ENCODE measurements at regions of chr2 and their contacts with region 1.

Region 1: GRCh38 chr2:230987137-230988020 is 8.5 kb upstream of the SPATA3 start:
- DNase-seq: peak; percentile 47
- ATAC-seq: peak; percentile 97
- H3K4me3 ChIP-seq: peak overlapping the region; percentile 18
- H3K27ac ChIP-seq: no peak overlapping the region
- H3K4me1 ChIP-seq: no peaks in the 10 kb centered on the region
- H3K27me3 ChIP-seq: peaks cover 31% of the 10 kb centered on the region
- CTCF ChIP-seq: peak; percentile 94
- POLR2A ChIP-seq: no peak
- RAD21 ChIP-seq: peak; percentile 92

Region 2: DNA sequence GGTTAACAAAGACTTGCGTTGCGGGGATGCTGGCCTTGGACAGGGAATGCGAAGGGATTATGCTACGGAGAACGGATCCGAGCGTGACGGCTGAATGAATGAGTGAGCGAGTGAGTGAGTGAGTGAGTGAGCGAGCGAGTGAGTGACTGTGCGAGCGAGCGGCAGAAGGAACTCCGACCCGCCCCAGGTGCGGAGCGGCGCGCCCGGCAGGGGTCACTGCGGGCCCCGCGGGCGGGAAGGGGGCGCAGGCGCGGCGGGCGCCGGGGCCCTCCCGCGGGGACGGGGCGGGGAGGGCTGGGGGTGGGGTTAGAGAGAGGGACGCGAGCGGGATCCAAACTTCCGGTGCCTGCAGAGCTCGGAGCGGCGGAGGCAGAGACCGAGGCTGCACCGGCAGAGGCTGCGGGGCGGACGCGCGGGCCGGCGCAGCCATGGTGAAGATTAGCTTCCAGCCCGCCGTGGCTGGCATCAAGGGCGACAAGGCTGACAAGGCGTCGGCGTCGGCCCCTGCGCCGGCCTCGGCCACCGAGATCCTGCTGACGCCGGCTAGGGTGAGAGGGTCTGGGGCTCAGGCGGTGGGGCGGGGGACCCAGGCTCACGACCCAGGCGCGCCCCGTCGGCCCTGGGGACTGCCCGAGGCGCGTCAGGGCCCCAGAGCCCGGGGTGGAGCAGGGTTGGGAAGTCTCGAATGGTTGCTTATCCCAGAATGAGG is 122.6 kb before region 1 on chr2 and contains the start of gene ITM2C:
- CTCF ChIA-PET with region 1: interaction called, 3 read pairs
- POLR2A ChIA-PET with region 1: no interaction called
- dilution Hi-C with region 1: no loop called
- in situ Hi-C with region 1: no loop called
- intact Hi-C with region 1: loop called (anchors 1 kb)
- DNase-seq: peak; percentile 62
- ATAC-seq: peak; percentile 91
- H3K4me3 ChIP-seq: peak within 1 kb of the TSS; percentile 98
- H3K27ac ChIP-seq: peak within 1 kb of the TSS; percentile 47
- H3K4me1 ChIP-seq: peaks cover 12% of the 10 kb centered on the region; the same call in 1 of the 2 replicates
- H3K27me3 ChIP-seq: peaks cover 26% of the 10 kb centered on the region
- CTCF ChIP-seq: peak; percentile 50
- POLR2A ChIP-seq: no peak
- RAD21 ChIP-seq: no peak
- total RNA-seq, gene ITM2C: 35.8 and 46.8 TPM in 2 replicates

Region 3: DNA sequence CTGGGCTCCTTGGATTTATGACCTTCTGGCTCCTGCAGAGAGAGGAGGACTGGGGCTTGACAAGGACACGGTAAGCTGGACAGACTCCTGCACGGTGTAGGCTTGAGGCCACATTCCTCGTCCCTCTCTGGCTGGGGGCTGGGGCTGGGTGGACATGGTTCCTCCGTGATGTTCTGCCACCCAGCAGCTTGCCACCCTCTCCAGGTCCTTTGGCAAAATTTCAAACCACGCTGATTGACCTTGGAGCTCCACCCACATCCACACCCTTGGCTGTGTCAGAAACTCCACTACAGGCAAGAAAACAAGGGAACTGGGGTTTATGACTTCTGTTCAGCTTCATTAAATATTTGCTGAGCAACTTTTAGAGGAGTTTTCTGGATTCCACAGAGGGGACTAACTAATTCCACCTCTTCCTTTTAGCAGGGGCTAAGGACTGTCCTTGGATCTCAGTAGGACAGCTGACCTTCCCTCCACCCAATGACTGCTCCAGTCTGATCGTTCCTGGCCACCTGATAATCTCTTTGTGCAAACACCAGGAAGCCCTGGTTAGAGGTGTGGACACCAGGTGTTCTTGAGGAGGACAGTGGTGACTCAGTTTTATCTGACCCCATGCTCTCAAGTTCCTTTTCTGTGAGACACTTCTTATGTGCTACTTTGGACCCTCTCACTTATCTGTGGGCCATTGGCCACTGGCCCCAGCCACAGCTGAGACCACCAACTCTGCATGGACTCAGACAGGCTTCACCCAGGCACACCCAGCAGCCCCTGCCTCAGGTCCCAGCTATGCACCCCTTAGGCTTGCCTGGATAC is 91.6 kb before region 1 on chr2:
- CTCF ChIA-PET with region 1: interaction called, 12 read pairs
- POLR2A ChIA-PET with region 1: no interaction called
- dilution Hi-C with region 1: no loop called
- in situ Hi-C with region 1: loop called (anchors 5 kb)
- intact Hi-C with region 1: no loop called
- DNase-seq: no peak
- ATAC-seq: no peak
- H3K4me3 ChIP-seq: no peak overlapping the region
- H3K27ac ChIP-seq: no peak overlapping the region
- H3K4me1 ChIP-seq: no peaks in the 10 kb centered on the region
- H3K27me3 ChIP-seq: peaks cover 59% of the 10 kb centered on the region
- CTCF ChIP-seq: no peak
- POLR2A ChIP-seq: no peak
- RAD21 ChIP-seq: no peak

Region 4: DNA sequence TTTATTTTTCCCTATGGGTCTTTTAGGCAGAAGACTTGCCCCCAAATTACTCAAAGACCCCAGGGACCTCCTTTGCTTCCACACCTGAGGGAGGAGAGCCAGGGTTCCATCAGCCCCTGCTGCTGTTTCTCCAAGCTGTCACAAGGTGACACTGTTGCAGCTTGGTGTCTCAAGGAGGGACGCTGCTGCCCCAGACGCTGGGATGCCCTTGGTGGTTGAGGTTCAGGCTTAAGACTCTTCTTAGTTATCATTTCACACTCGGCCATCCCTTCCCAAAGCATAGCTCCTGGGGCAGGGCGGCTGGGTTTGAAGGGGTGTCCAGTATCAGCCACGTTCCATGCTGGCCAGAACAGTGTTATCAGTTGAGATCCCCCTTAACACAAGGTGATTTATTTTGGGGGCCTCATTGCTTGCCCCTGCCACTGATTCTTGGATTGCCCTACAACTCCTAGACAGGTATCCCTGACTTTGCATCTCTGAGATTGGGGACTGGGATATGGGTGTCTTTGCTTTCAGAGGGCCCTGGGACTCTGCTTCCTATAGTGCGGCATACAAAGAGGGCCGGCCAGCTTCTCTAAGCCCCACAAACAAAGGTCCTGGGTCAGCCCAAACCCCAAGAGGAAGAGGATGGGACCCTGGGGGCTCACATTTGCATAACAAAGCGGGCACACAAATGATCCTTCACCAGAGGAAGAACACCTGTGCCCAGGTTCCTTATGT is 85.0 kb before region 1 on chr2:
- CTCF ChIA-PET with region 1: interaction called, 12 read pairs
- POLR2A ChIA-PET with region 1: no interaction called
- dilution Hi-C with region 1: no loop called
- in situ Hi-C with region 1: loop called (anchors 5 kb)
- intact Hi-C with region 1: loop called (anchors 1 kb)
- DNase-seq: peak; percentile 76
- ATAC-seq: peak; percentile 99
- H3K4me3 ChIP-seq: no peak overlapping the region
- H3K27ac ChIP-seq: no peak overlapping the region
- H3K4me1 ChIP-seq: no peaks in the 10 kb centered on the region
- H3K27me3 ChIP-seq: peaks cover 31% of the 10 kb centered on the region
- CTCF ChIP-seq: peak; percentile 95
- POLR2A ChIP-seq: no peak
- RAD21 ChIP-seq: peak; percentile 94

Region 5: DNA sequence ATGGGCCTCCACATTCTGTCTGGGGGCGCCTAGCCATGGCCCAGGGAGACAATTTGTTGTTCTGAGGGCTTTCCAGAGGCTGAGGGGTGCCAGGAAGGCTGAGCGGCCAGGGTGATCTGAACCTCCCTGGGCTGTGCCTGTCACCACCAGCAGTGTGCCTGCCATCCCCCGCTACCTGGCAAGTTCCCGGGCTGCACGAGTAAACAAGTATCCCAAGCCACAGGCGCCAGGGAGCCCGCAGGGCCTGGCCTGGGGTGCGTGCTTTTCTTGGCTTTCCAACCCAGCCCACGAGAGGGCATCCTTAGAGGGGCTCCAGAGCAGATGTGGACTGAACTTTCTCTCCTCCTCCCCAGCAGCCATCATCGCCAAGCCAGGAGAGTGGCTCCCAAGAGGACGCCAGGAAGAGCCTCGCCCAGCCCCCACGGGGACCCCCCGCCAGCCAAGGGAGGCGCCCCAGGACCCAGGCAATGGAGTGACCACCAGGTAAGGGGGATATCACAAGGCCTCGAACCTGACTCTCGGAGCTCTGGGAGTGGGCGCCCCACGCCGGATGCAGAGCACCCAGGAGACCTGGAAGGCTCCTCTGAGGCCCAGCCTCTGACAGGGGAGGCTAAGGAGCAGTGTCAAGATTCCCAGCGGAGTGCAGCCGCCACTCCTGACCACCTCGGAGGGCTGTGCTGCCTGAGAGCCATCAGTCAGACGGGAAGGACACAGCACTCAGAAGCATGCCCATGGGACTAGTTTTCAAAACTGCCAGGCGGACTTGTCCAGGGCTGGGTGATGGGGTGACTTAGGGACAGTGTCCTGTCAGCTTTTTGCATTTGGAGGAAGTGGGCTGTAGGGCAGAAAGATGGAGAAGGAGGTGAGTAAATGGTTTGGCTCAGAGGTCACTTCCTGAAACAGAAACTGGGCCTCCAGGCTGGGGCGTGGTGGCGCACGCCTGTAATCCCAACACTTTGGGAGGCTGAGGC is 373.3 kb after region 1 on chr2:
- CTCF ChIA-PET with region 1: no interaction called
- POLR2A ChIA-PET with region 1: no interaction called
- dilution Hi-C with region 1: no loop called
- in situ Hi-C with region 1: no loop called
- intact Hi-C with region 1: no loop called
- DNase-seq: no peak
- ATAC-seq: no peak
- H3K4me3 ChIP-seq: no peak overlapping the region
- H3K27ac ChIP-seq: no peak overlapping the region
- H3K4me1 ChIP-seq: peaks cover 8% of the 10 kb centered on the region
- H3K27me3 ChIP-seq: no peaks in the 10 kb centered on the region
- CTCF ChIP-seq: no peak
- POLR2A ChIP-seq: no peak
- RAD21 ChIP-seq: no peak

Measured in IMR-90 (cell line).